ENCODE measurements at regions of chr2 and their contacts with region 1.

Region 1: DNA sequence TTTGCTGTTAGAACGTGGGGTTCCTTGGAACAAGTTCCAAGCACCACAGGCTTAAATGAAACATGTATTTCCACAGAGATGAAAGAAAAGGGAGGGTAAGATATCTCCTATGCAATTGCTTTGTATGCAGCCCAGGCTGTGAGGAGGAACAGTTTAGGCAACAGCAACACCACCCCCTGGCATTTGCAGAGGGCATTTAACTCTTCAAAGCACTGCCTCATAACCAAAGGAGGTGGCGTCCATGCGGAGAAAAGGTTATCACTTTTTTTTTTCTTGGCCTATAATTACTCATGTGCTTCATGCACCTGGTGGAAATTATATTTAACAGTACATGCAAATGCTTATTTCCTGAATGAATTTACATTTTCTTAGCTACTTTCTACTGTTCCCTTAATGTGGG is 286.0 kb downstream of the LPIN1 start:
- DNase-seq: peak; percentile 97
- H3K4me3 ChIP-seq: peak overlapping the region; percentile 45
- H3K27ac ChIP-seq: peak overlapping the region; percentile 98
- H3K4me1 ChIP-seq: peaks cover 88% of the 10 kb centered on the region
- CTCF ChIP-seq: peak; percentile 81

Region 2: GRCh38 chr2:11743846-11744553 is 288.4 kb before region 1 on chr2:
- CTCF ChIA-PET with region 1: no interaction called
- POLR2A ChIA-PET with region 1: no interaction called
- intact Hi-C with region 1: loop called (anchors 5 kb)
- DNase-seq: peak; percentile 81
- H3K4me3 ChIP-seq: peak overlapping the region; percentile 51
- H3K27ac ChIP-seq: peak overlapping the region; percentile 31
- H3K4me1 ChIP-seq: peaks cover 52% of the 10 kb centered on the region
- CTCF ChIP-seq: no peak

Region 3: DNA sequence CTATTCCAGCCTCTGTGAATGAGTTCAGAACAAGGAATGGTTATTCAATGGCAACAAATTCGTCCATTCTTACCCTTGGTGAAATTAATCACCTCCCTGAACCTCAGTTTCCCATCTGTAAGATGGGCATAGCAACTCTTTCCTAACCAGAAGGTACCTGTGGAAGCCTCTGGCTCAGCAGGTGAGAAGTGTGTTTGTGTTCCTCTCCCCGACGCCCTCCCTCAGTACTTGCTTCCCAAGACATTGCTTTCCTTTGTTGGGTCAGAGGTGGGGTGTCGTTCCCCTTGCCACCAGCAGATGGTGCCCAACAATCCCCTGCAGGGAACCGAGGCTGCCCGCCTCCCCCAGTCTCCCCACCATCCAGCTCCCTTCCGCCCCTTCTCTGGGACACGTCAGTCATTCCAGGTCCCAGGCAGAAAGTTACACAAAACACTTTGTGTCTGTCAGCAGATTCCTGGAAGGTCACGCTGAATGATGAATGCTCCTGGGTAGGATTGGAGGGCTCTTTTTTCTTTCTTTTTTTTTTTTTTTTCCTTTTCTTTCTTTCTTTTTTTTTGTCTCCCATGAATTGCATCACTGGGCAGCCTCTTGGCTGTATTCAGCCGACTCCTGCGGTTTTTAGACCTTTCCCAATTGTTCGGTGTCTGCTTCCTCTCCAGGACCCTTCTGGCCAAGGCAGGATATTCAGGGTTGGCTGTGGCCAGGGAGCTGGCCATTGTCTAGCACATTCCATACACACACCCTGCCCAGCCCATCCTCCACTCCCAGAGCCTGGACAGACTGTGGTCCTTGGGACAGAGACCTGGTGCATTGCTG is 168.7 kb before region 1 on chr2:
- CTCF ChIA-PET with region 1: no interaction called
- POLR2A ChIA-PET with region 1: interaction called, 4 read pairs
- intact Hi-C with region 1: loop called (anchors 1 kb)
- DNase-seq: peak; percentile 74
- H3K4me3 ChIP-seq: no peak overlapping the region
- H3K27ac ChIP-seq: no peak overlapping the region
- H3K4me1 ChIP-seq: peaks cover 20% of the 10 kb centered on the region
- CTCF ChIP-seq: peak; percentile 93

Region 4: GRCh38 chr2:11904029-11904428 is 128.4 kb before region 1 on chr2:
- CTCF ChIA-PET with region 1: no interaction called
- POLR2A ChIA-PET with region 1: interaction called, 8 read pairs
- intact Hi-C with region 1: loop called (anchors 1 kb)
- DNase-seq: peak; percentile 61
- H3K4me3 ChIP-seq: no peak overlapping the region
- H3K27ac ChIP-seq: no peak overlapping the region
- H3K4me1 ChIP-seq: peaks cover 22% of the 10 kb centered on the region
- CTCF ChIP-seq: peak; percentile 55

Region 5: GRCh38 chr2:11993749-11994148 is 38.6 kb before region 1 on chr2:
- CTCF ChIA-PET with region 1: no interaction called
- POLR2A ChIA-PET with region 1: no interaction called
- intact Hi-C with region 1: no loop called
- DNase-seq: no peak
- H3K4me3 ChIP-seq: no peak overlapping the region
- H3K27ac ChIP-seq: no peak overlapping the region
- H3K4me1 ChIP-seq: no peaks in the 10 kb centered on the region
- CTCF ChIP-seq: no peak

Region 6: GRCh38 chr2:12044857-12045256 is 12.5 kb after region 1 on chr2:
- CTCF ChIA-PET with region 1: interaction called, 94 read pairs
- POLR2A ChIA-PET with region 1: interaction called, 256 read pairs
- intact Hi-C with region 1: loop called (anchors 1 kb)
- DNase-seq: peak; percentile 88
- H3K4me3 ChIP-seq: peak overlapping the region; percentile 61
- H3K27ac ChIP-seq: peak overlapping the region; percentile 90
- H3K4me1 ChIP-seq: peaks cover 84% of the 10 kb centered on the region
- CTCF ChIP-seq: 0 out of 2 replicates have a peak, but pooled peaks have one; percentile 30

Region 7: GRCh38 chr2:12050396-12050795 is 18.0 kb after region 1 on chr2:
- CTCF ChIA-PET with region 1: interaction called, 94 read pairs
- POLR2A ChIA-PET with region 1: interaction called, 256 read pairs
- intact Hi-C with region 1: loop called (anchors 1 kb)
- DNase-seq: peak; percentile 84
- H3K4me3 ChIP-seq: peak overlapping the region; percentile 1
- H3K27ac ChIP-seq: peak overlapping the region; percentile 90
- H3K4me1 ChIP-seq: peaks cover 66% of the 10 kb centered on the region
- CTCF ChIP-seq: peak; percentile 77

Region 8: DNA sequence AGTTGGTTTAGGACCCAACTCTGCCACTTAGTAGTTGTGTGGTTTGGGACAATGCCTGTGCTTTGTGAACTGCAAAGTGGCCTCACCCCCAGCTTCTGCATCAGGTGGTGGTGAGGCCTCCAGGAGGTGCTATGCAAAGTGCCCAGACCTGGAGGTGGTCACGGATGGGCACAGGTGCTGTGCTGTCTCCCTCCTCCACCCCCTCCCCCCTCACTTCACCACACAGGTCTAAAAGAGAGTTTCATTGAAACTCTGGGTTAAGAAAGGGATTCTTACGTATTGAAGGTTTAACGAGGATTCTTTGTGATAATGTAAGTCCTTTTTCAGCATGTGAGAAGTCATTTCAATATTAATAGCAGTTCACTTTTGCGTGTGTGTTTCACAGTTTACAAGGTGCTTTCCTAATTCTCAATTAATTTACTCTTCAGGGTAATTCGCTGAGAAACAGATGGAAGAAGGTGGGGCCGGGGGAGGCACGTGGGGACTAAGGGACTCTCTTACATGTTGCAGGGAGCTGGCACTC is 83.9 kb after region 1 on chr2:
- CTCF ChIA-PET with region 1: interaction called, 3 read pairs
- POLR2A ChIA-PET with region 1: interaction called, 4 read pairs
- intact Hi-C with region 1: loop called (anchors 1 kb)
- DNase-seq: peak; percentile 74
- H3K4me3 ChIP-seq: peak overlapping the region; percentile 18
- H3K27ac ChIP-seq: no peak overlapping the region
- H3K4me1 ChIP-seq: peaks cover 25% of the 10 kb centered on the region
- CTCF ChIP-seq: peak; percentile 49